A673 (cell line): ENCODE measurements at regions of chr3 and their contacts with region 1.

Region 1: DNA sequence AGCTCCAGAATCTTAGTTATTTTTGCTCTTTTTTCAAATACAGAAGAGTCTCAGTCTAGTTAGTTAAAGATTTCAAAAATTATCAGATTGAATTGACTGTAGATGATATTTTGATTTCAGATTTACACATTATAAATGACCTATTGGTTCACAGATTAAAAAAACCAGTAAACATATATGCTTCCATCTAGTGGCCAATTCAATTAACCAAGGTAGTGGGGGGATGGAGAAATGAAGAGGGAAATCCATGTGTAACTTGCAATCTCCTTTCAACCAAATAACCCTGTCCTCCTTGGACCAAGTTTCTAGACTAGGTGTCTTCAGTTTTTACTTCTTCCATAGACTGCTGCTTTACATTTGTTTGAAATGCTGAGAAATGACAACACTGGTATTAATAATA is 789.8 kb downstream of the ROBO1 start:
- DNase-seq: peak; percentile 68
- H3K4me3 ChIP-seq: peak overlapping the region; percentile 37
- H3K27ac ChIP-seq: peak overlapping the region; percentile 62
- H3K4me1 ChIP-seq: peaks cover 80% of the 10 kb centered on the region
- H3K27me3 ChIP-seq: no peaks in the 10 kb centered on the region
- CTCF ChIP-seq: peak; percentile 69

Region 2: GRCh38 chr3:78867409-78868372 is 110.3 kb before region 1 on chr3:
- CTCF ChIA-PET with region 1: no interaction called
- POLR2A ChIA-PET with region 1: no interaction called
- intact Hi-C with region 1: loop called (anchors 5 kb)
- DNase-seq: peak; percentile 85
- H3K4me3 ChIP-seq: peak overlapping the region; percentile 18
- H3K27ac ChIP-seq: peak overlapping the region; percentile 90
- H3K4me1 ChIP-seq: peaks cover 59% of the 10 kb centered on the region
- H3K27me3 ChIP-seq: no peaks in the 10 kb centered on the region
- CTCF ChIP-seq: no peak

Region 3: GRCh38 chr3:78919021-78919755 is 58.8 kb before region 1 on chr3:
- CTCF ChIA-PET with region 1: no interaction called
- POLR2A ChIA-PET with region 1: no interaction called
- intact Hi-C with region 1: loop called (anchors 5 kb)
- DNase-seq: peak; percentile 80
- H3K4me3 ChIP-seq: no peak overlapping the region
- H3K27ac ChIP-seq: peak overlapping the region; percentile 91
- H3K4me1 ChIP-seq: peaks cover 52% of the 10 kb centered on the region
- H3K27me3 ChIP-seq: no peaks in the 10 kb centered on the region
- CTCF ChIP-seq: no peak

Region 4: DNA sequence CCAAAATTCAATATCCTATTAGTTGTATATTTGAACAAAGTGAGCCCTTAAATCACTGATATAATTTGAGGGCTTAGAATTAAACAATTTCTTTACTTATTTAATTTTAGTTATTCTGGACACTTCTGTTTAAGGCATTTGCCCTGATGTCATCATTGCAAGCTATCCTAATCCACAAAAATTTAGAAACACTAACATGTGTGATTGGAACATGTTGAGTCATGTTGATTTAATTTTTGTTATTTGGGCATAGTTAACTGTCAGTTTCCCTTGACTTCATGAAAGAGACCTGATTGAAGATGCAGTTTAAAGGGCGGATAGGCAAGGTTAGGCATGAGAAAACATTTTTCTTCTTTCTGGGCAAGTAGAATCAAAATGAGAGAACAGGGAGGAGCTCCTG is 107.1 kb after region 1 on chr3:
- CTCF ChIA-PET with region 1: no interaction called
- POLR2A ChIA-PET with region 1: no interaction called
- intact Hi-C with region 1: no loop called
- DNase-seq: no peak
- H3K4me3 ChIP-seq: no peak overlapping the region
- H3K27ac ChIP-seq: no peak overlapping the region
- H3K4me1 ChIP-seq: no peaks in the 10 kb centered on the region
- H3K27me3 ChIP-seq: peaks cover 6% of the 10 kb centered on the region
- CTCF ChIP-seq: no peak

Region 5: GRCh38 chr3:79383402-79384012 is 405.5 kb after region 1 on chr3:
- CTCF ChIA-PET with region 1: no interaction called
- POLR2A ChIA-PET with region 1: no interaction called
- intact Hi-C with region 1: no loop called
- DNase-seq: peak; percentile 31
- H3K4me3 ChIP-seq: no peak overlapping the region
- H3K27ac ChIP-seq: no peak overlapping the region
- H3K4me1 ChIP-seq: peaks cover 5% of the 10 kb centered on the region
- H3K27me3 ChIP-seq: no peaks in the 10 kb centered on the region
- CTCF ChIP-seq: no peak